Naive thymus-derived CD4-positive, alpha-beta T cell (primary cell): ENCODE measurements at regions of chr7 and their contacts with region 1.

Region 1: DNA sequence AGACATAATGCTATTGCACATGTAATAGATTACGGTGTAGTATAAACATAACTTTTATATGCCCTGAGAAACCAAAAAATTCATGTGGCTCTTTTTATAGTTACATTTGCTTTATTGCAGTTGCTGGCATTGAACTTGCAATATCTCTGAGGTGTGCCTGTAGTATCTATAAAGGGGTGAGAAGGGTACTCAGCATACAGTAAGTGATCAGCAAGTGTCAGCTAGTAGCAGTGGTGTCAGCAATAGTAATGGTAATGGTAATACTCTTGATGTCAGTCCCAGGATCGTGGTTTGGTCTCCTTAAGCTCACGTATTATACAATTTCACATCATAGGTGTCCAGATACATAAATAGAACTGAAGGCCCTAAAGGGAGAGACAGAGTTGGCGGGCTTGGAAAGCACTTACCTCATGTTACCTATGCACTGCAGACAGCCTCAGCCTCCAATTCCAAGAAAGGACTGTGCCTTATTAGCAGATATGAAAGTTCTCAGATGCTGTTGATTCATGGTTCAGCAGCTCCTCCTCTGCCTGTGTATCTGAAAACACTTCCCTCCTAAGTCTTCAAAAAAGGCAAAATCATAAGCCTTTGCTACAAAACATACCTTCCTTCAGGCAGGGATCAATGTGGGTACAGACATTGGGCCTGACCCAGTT is 6.6 kb upstream of the GIMAP7 start:
- DNase-seq: peak in 1 of 9 donors; percentile 22
- ATAC-seq: peak; percentile 56
- H3K4me3 ChIP-seq: peak overlapping the region; percentile 52
- H3K4me3 Mint-ChIP-seq: peak overlapping the region; percentile 67 to 99 (median 88)
- H3K27ac ChIP-seq: peak overlapping the region; percentile 74
- H3K27ac Mint-ChIP-seq: peak overlapping the region; percentile 92 to 98 (median 95)
- H3K4me1 ChIP-seq: peaks cover 61 to 93% of the 10 kb centered on the region in 2 donors
- H3K4me1 Mint-ChIP-seq: peaks cover 54 to 98% (median 94%) of the 10 kb centered on the region in 7 donors
- H3K27me3 ChIP-seq: no peaks in the 10 kb centered on the region
- H3K27me3 Mint-ChIP-seq: no peaks in the 10 kb centered on the region

Region 2: GRCh38 chr7:150481186-150481920 is 26.7 kb before region 1 on chr7:
- CTCF ChIA-PET with region 1: interaction called, 11 read pairs
- POLR2A ChIA-PET with region 1: interaction called, 637 read pairs
- intact Hi-C with region 1: loop called in 1 of 2 experiments (anchors 1 kb)
- DNase-seq: peak in 8 of 9 donors; percentile 46 to 81 (median 71)
- ATAC-seq: peak; percentile 68
- H3K4me3 ChIP-seq: peak overlapping the region; percentile 12
- H3K4me3 Mint-ChIP-seq: peak overlapping the region; percentile 79 to 97 (median 90)
- H3K27ac ChIP-seq: peak overlapping the region; percentile 95
- H3K27ac Mint-ChIP-seq: peak overlapping the region; percentile 97 to 100 (median 100)
- H3K4me1 ChIP-seq: peaks cover 84 to 89% of the 10 kb centered on the region in 2 donors
- H3K4me1 Mint-ChIP-seq: peaks cover 58 to 99% (median 92%) of the 10 kb centered on the region in 7 donors
- H3K27me3 ChIP-seq: no peaks in the 10 kb centered on the region
- H3K27me3 Mint-ChIP-seq: no peaks in the 10 kb centered on the region

Region 3: GRCh38 chr7:151143261-151144015 is 635.4 kb after region 1 on chr7:
- CTCF ChIA-PET with region 1: no interaction called
- POLR2A ChIA-PET with region 1: no interaction called
- intact Hi-C with region 1: no loop called
- DNase-seq: no peak
- ATAC-seq: no peak
- H3K4me3 ChIP-seq: no peak overlapping the region
- H3K4me3 Mint-ChIP-seq: no peak overlapping the region
- H3K27ac ChIP-seq: no peak overlapping the region
- H3K27ac Mint-ChIP-seq: peak overlapping the region in 1 of 9 donors; percentile 31
- H3K4me1 ChIP-seq: no peaks in the 10 kb centered on the region
- H3K4me1 Mint-ChIP-seq: no peaks in the 10 kb centered on the region
- H3K27me3 ChIP-seq: no peaks in the 10 kb centered on the region
- H3K27me3 Mint-ChIP-seq: peaks cover 0 to 8% (median 0%) of the 10 kb centered on the region in 5 donors